ENCODE measurements at regions of chr2 and their contacts with region 1.

Region 1: GRCh38 chr2:196200557-196200956 is 29.2 kb upstream of the STK17B start:
- DNase-seq: peak; percentile 56
- H3K4me3 Mint-ChIP-seq: peak overlapping the region; percentile 64
- H3K27ac Mint-ChIP-seq: peak overlapping the region; percentile 89
- H3K4me1 Mint-ChIP-seq: peaks cover 56% of the 10 kb centered on the region
- H3K27me3 Mint-ChIP-seq: no peaks in the 10 kb centered on the region

Region 2: GRCh38 chr2:195879153-195879552 is 321.4 kb before region 1 on chr2:
- CTCF ChIA-PET with region 1: no interaction called
- POLR2A ChIA-PET with region 1: no interaction called
- DNase-seq: no peak
- H3K4me3 Mint-ChIP-seq: no peak overlapping the region
- H3K27ac Mint-ChIP-seq: no peak overlapping the region
- H3K4me1 Mint-ChIP-seq: no peaks in the 10 kb centered on the region
- H3K27me3 Mint-ChIP-seq: peaks cover 3% of the 10 kb centered on the region

Region 3: GRCh38 chr2:196187898-196188458 is 12.6 kb before region 1 on chr2:
- CTCF ChIA-PET with region 1: interaction called, 5 read pairs
- POLR2A ChIA-PET with region 1: interaction called, 44 read pairs
- DNase-seq: no peak
- H3K4me3 Mint-ChIP-seq: no peak overlapping the region
- H3K27ac Mint-ChIP-seq: no peak overlapping the region
- H3K4me1 Mint-ChIP-seq: peaks cover 53% of the 10 kb centered on the region
- H3K27me3 Mint-ChIP-seq: no peaks in the 10 kb centered on the region

Region 4: DNA sequence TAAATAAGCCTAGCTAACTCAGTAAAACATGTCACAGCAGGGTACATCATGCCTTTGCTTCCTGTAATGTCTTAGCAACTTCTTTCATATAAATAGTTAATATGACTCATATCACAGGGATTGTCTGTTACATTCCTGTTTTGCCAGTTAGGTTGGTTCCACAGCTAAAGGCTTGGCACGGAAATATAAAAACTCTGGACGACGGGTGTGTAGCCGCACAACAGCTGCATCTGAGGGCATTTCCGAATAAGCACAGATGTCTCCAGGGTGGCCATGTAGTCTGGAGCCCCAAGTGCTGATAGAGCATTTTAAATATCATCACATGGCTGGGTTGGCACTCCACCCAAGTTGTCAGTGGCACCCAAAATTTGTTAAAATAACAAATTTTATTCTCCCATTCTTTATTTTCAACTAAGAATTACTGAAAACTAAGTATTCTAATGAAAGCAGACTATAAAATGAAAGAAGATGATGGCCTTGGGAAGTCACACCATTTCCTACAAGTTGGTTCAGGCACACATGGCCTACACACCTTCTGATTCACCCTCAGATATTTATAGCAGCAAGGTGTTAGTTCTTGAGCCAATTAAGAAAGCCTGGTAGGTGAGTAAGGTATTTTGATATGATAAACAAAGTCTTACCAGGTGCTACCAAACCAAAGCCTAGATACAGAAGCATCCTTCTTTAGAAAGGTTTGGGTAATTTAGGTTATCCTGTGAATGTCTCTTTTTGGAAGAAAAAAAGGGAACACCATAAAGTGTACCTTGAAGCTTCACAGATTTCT is 32.7 kb after region 1 on chr2:
- CTCF ChIA-PET with region 1: interaction called, 3 read pairs
- POLR2A ChIA-PET with region 1: interaction called, 24 read pairs
- DNase-seq: no peak
- H3K4me3 Mint-ChIP-seq: no peak overlapping the region
- H3K27ac Mint-ChIP-seq: peak overlapping the region; percentile 85
- H3K4me1 Mint-ChIP-seq: peaks cover 91% of the 10 kb centered on the region
- H3K27me3 Mint-ChIP-seq: no peaks in the 10 kb centered on the region

Region 5: DNA sequence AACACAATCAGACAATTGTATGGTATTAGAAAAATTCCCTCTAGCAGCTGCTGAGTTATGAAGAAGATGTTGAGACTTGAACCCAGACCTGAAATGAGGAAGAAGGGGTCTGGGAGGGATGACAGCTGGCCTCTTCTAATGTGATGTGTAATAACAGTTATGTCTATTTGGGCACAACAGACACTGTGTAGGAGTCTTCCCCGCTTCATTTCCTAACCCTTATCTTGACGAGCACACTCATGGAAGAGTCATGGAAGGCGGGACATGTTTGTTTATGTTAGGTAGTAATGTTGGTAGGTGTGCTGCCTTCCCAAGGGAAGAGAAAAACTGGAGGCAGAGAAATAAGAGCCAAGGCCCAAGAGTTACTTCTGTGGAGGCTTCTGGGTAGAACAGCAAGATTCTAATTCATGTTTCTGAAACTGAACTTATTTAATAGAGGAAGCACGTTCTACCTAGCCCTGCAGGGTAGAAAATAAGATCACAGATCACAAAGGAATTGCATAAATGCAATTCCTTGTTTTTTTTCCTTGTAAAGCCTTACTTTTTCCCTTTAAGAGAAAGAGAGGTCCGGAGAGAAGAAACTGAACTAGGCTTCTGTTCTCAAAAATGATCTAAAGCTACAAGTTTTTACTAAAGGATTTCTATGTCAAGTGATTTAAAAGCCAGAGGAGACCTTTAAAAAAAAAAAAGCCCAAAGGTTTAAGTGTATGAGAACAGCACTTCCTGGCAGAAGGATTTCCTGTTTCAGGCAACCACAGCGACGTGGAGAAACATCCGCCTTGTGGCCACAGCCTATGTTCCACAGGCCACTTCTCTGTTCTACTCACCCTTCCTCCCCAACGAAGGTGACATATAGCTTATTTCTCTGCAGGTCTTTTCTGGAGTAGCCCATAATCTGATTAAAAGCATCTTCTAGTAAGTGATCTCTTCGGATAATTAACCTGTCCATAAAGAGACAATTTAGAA is 39.3 kb after region 1 on chr2:
- CTCF ChIA-PET with region 1: interaction called, 3 read pairs
- POLR2A ChIA-PET with region 1: interaction called, 26 read pairs
- DNase-seq: peak; percentile 93
- H3K4me3 Mint-ChIP-seq: peak overlapping the region; percentile 57
- H3K27ac Mint-ChIP-seq: peak overlapping the region; percentile 93
- H3K4me1 Mint-ChIP-seq: peaks cover 74% of the 10 kb centered on the region
- H3K27me3 Mint-ChIP-seq: no peaks in the 10 kb centered on the region

Measured in activated CD4-positive, alpha-beta memory T cell treated with anti-CD3 and anti-CD28 coated beads, Interleukin-2, amount 10 ng/mL, durations not matched to agents 7 days and 5 days (primary cell).